Endothelial cell of umbilical vein (primary cell): ENCODE measurements at regions of chr2 and their contacts with region 1.

Region 1: GRCh38 chr2:177263451-177264208 is 897 bp downstream of the NFE2L2 start:
- DNase-seq: peak; percentile 97
- H3K4me3 ChIP-seq: peak overlapping the region; percentile 79 to 98 (median 90)
- H3K27ac ChIP-seq: peak overlapping the region; percentile 94
- H3K4me1 ChIP-seq: peaks cover 27% of the 10 kb centered on the region
- H3K27me3 ChIP-seq: no peaks in the 10 kb centered on the region
- CTCF ChIP-seq: peak; percentile 91 to 98
- POLR2A ChIP-seq: peak; percentile 84

Region 2: DNA sequence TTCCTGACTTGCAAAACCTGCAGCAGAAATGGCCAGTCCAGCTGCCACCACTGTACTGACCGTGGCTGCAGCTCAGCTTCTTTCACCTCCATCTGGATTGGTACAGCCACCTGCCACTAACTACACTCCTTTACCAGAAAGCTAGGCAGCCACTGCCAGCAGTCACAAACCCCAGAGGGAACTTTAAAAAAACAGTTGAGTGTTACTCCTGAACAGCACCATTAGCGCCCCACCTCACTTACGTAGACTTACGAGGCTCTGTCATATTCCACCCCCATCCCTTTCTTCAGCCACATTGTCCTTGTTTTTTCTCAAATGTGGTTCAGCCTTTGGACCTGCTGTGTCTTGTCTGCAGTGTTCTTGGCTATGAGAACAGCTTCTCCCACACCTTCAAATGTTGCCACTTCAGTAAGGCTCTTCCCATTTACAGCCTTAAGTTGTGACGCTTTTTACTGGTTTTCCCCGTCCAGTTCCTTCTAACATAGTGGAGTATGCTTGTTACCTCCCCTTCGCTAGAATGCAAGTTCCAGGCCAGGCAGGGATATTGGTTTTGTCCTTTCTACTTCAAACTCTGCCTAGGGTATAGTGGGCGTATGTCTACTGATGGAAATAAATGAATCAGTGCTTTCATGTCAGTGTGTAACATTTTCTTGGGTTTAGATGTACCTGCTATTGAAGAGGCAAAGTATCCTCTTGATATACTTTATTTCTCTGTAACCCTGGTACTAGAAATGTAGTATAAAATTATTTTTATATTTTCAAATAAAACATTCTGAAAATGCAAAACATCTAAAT is 34.0 kb before region 1 on chr2:
- CTCF ChIA-PET with region 1: interaction called, 36 read pairs
- POLR2A ChIA-PET with region 1: interaction called, 4 read pairs
- dilution Hi-C with region 1: no loop called
- intact Hi-C with region 1: loop called (anchors 5 kb)
- DNase-seq: no peak
- H3K4me3 ChIP-seq: no peak overlapping the region
- H3K27ac ChIP-seq: no peak overlapping the region
- H3K4me1 ChIP-seq: no peaks in the 10 kb centered on the region
- H3K27me3 ChIP-seq: no peaks in the 10 kb centered on the region
- CTCF ChIP-seq: no peak
- POLR2A ChIP-seq: no peak

Region 3: DNA sequence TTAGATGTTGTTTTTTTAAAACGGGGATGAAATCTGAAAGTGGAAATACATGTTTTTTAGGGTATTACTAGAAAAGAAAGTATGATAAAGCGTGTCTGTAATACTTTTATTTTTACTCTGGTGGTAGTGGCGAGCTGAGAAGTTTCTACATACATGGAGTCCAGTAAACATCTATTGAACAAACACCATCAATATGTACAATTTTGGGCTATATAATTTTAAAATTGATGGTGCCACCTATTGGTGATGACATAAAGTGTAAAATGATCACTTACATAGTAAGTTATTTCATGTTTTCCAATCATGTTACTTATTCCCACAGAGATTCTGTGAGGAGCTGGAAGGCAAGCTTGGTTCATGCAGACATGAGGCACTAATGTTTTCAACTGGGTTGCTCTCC is 32.4 kb after region 1 on chr2:
- CTCF ChIA-PET with region 1: interaction called, 31 read pairs
- POLR2A ChIA-PET with region 1: interaction called, 3 read pairs
- dilution Hi-C with region 1: no loop called
- intact Hi-C with region 1: loop called (anchors 1 kb)
- DNase-seq: peak; percentile 67
- H3K4me3 ChIP-seq: no peak overlapping the region
- H3K27ac ChIP-seq: no peak overlapping the region
- H3K4me1 ChIP-seq: no peaks in the 10 kb centered on the region
- H3K27me3 ChIP-seq: no peaks in the 10 kb centered on the region
- CTCF ChIP-seq: peak; percentile 2 to 33
- POLR2A ChIP-seq: no peak

Region 4: DNA sequence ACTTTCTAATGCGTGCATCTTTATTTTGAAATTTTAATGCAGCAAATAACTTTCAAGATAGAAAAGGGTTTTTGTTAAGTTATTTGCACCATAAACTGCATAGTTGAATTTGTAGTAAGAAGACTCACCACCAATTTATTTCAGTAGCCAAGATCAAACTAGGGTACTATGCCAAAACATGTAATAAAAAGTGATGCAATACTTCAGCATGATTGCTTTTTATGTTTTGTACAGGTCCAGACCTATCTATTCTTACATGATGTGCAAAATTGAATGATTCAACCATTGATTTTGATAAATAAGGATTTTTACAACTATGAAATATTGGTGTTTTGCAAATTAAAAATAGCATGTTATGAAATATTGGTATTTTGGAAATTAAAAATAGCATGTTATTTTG is 155.6 kb after region 1 on chr2:
- CTCF ChIA-PET with region 1: interaction called, 45 read pairs
- POLR2A ChIA-PET with region 1: no interaction called
- dilution Hi-C with region 1: no loop called
- intact Hi-C with region 1: loop called (anchors 1 kb)
- DNase-seq: no peak
- H3K4me3 ChIP-seq: no peak overlapping the region
- H3K27ac ChIP-seq: no peak overlapping the region
- H3K4me1 ChIP-seq: peaks cover 26% of the 10 kb centered on the region
- H3K27me3 ChIP-seq: no peaks in the 10 kb centered on the region
- CTCF ChIP-seq: no peak
- POLR2A ChIP-seq: no peak

Region 5: DNA sequence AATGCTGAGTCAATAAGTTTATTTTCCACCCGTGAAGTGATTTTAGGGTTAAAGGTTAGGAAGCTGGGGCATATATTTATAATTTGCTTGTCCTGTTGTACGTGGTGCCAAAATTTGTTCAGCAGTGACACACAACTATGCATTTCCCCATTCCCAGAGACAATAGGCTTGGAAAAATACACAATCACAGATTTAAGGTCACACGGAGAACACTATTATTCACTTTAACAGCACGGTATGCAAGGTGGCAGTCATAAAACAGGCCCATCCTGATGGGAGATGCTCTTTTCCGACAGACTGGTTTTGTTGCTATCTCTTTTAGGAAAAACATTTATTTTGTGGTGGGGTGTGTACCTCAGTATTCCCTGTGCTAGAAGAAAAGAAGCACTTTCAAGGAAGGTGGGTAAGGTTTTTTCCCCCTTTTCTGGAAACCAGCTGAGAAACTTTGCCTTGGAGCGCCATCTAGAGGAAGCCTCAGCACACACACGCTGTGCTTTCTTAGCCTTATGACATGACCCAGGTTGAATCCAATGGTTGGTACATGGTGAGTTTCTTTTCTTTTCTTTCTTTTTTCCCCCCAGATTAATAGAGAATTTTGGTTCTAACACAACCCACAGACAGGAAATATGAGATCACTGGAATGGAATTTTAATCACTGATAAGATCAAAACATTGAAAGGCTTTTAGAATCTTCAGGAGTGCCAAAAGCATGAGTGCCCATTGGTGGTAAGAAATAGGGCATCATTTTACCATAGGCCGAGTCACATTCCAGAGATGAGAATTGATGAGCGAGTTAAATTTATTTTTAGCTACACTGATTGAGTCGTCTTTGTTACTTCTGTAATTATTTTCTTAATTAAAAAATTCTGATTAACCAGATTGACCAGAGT is 461.0 kb after region 1 on chr2:
- CTCF ChIA-PET with region 1: interaction called, 9 read pairs
- POLR2A ChIA-PET with region 1: no interaction called
- dilution Hi-C with region 1: no loop called
- intact Hi-C with region 1: loop called (anchors 1 kb)
- DNase-seq: peak; percentile 89
- H3K4me3 ChIP-seq: peak overlapping the region in 1 of 3 experiments; percentile 9
- H3K27ac ChIP-seq: peak overlapping the region; percentile 62
- H3K4me1 ChIP-seq: peaks cover 13% of the 10 kb centered on the region
- H3K27me3 ChIP-seq: no peaks in the 10 kb centered on the region
- CTCF ChIP-seq: peak; percentile 84 to 94
- POLR2A ChIP-seq: no peak